ENCODE measurements at regions of chr7 and their contacts with region 1.

Region 1: GRCh38 chr7:128791121-128791961 is 427 bp upstream of the CCDC136 start:
- DNase-seq: peak; percentile 71
- H3K4me3 Mint-ChIP-seq: peak overlapping the region; percentile 76
- H3K27ac Mint-ChIP-seq: no peak overlapping the region
- H3K4me1 Mint-ChIP-seq: no peaks in the 10 kb centered on the region
- H3K27me3 Mint-ChIP-seq: peaks cover 70% of the 10 kb centered on the region
- CTCF ChIP-seq: no peak

Region 2: GRCh38 chr7:128883622-128884501 is 92.5 kb after region 1 on chr7:
- CTCF ChIA-PET with region 1: no interaction called
- intact Hi-C with region 1: loop called (anchors 5 kb)
- DNase-seq: peak; percentile 88
- H3K4me3 Mint-ChIP-seq: no peak overlapping the region
- H3K27ac Mint-ChIP-seq: no peak overlapping the region
- H3K4me1 Mint-ChIP-seq: peaks cover 6% of the 10 kb centered on the region
- H3K27me3 Mint-ChIP-seq: no peaks in the 10 kb centered on the region
- CTCF ChIP-seq: peak; percentile 95